Ascending aorta (tissue), 2 donors: ENCODE measurements at regions of chr10 and their contacts with region 1.

Region 1: DNA sequence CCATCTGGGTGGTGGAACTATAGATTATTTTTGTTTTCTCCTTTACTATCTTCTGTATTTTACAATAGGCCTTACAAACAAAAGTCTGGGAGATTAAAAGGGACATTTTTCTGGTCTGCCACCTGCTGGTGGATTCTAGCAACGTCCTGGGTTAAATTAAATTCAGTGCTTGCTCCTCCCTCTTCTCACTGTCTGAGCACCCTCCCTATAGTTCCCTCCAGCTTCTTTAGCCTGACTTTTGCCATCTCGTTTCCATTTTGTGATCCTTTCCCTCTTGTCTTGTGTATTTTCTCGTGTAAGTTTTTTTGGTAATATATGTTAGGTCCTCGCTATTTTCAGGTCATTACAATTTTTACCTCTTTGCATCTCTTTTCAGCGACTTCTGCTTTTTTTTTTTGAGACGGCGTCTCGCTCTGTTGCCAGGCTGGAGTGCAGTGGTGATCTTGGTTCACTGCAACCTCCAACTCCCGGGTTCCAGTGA is 16.1 kb downstream of the ANKRD16 start:
- DNase-seq: peak in 1 of 2 donors; percentile 76
- H3K4me3 ChIP-seq: no peak overlapping the region
- H3K27ac ChIP-seq: no peak overlapping the region
- H3K4me1 ChIP-seq: no peaks in the 10 kb centered on the region
- H3K27me3 ChIP-seq: no peaks in the 10 kb centered on the region
- CTCF ChIP-seq: peak; percentile 39 to 64 (median 55)

Region 2: DNA sequence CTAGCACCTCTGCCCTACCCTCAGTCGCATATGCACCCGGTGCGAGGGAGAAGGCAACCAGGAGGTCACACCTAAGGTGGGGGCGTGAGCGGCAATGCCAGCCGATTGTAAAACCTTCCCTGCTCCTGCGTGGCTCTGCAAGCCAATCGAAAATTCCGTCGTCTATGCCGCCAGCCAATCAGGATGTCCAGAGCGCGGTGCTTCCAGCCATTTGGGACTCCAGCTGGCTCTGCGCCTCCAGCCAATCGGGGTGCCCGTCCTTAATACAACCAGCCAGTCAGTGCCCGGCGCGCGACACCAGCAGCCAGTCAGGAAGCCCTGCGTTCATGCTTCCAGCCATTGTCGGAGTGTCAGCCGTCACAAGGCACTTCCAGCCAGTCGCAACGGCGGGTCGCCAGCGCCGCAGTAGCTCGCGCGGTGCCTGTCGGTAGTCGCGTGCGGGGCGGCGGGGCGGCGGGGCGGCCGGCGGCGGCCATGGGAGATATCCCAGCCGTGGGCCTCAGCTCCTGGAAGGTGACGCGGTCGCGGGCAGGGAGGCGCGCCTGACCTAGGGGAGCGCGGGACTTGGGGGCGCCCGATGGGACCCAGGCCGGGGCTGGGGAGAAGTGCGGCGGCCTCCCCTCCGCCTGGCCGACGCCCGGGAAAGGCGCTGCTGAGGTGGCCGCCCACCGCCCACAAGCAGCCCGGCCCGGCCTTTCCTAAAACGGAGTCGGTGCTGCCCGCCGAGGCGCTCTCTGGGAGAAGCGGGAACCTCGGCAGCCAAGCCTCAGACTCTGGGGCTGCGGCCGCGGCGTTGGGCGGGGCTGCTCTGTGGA is 1047.5 kb before region 1 on chr10 and contains the start of gene AKR1E2:
- intact Hi-C with region 1: loop called (anchors 10 kb)
- DNase-seq: peak; percentile 69 to 92
- H3K4me3 ChIP-seq: peak within 1 kb of the TSS; percentile 51 to 66
- H3K27ac ChIP-seq: peak within 1 kb of the TSS; percentile 90 to 92
- H3K4me1 ChIP-seq: peaks cover 0 to 5% of the 10 kb centered on the region in 2 donors
- H3K27me3 ChIP-seq: no peaks in the 10 kb centered on the region
- CTCF ChIP-seq: no peak
- total RNA-seq, gene AKR1E2: 0.53 TPM

Region 3: DNA sequence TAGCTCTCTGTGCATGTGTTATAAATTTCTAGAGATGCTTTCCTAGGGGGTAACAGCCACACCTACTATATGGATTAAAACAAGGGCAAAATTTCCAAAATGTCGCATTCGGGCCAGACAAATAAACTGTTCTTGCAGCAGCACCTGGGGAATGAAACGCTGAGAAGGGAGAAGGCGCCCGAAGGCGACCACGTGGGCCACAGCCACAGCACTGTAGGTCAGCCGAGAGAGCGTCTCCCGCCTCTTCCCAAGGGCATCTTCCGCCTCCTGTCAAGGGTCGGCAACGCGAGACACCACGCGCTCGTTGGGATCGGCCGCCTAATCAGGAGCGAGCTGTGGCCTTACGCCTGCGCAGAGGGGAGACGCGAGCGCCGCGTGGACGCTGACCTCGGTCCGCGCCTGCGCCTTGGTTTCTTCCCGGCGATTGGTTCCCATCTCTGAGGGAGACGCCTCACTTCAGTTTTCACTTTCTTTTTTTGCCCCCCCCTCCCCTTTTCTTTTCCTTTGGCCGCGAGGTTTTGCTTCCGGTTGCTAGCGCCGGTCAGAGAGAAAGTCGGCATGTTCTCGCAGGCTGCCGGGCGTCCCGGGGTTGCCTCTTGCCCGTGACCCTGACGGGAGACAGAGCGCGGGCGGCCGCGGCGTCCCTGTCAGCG is 189.1 kb before region 1 on chr10 and contains the start of gene TASOR2:
- intact Hi-C with region 1: loop called (anchors 2 kb)
- DNase-seq: peak; percentile 85 to 98
- H3K4me3 ChIP-seq: peak within 1 kb of the TSS; percentile 85 to 90
- H3K27ac ChIP-seq: peak within 1 kb of the TSS; percentile 85 to 87
- H3K4me1 ChIP-seq: peaks cover 0 to 13% of the 10 kb centered on the region in 2 donors
- H3K27me3 ChIP-seq: no peaks in the 10 kb centered on the region
- CTCF ChIP-seq: no peak
- total RNA-seq, gene TASOR2: 12.2 TPM

Region 4: DNA sequence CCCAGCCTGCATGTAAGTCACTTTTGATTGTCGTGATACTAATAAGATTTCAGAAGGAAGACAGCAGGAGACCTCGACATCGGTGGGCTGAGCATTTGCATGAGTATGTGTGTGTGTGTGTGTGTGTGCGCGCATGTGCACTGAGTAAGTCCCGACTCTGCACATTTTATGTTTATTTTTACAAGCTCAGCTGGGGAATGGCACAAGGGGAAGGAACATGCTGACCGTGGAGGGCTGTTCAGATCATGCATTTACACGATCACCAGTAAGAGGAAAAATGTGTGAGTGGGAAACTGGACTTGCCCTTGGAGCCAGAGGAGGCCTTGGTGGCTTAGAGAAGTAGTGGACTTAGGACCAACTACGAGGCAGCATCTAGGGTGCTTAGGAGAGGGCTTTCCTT is 147.3 kb after region 1 on chr10:
- intact Hi-C with region 1: no loop called
- DNase-seq: no peak
- H3K4me3 ChIP-seq: no peak overlapping the region
- H3K27ac ChIP-seq: no peak overlapping the region
- H3K4me1 ChIP-seq: no peaks in the 10 kb centered on the region
- H3K27me3 ChIP-seq: no peaks in the 10 kb centered on the region
- CTCF ChIP-seq: no peak

Region 5: GRCh38 chr10:6843481-6843881 is 969.9 kb after region 1 on chr10:
- intact Hi-C with region 1: no loop called
- DNase-seq: no peak
- H3K4me3 ChIP-seq: no peak overlapping the region
- H3K27ac ChIP-seq: no peak overlapping the region
- H3K4me1 ChIP-seq: no peaks in the 10 kb centered on the region
- H3K27me3 ChIP-seq: no peaks in the 10 kb centered on the region
- CTCF ChIP-seq: no peak